PC-9 (cell line): ENCODE measurements at regions of chr1 and their contacts with region 1.

Region 1: GRCh38 chr1:26417111-26417759 is 6.6 kb downstream of the LIN28A start:
- DNase-seq: peak; percentile 84 to 93
- H3K4me3 ChIP-seq: no peak overlapping the region
- H3K27ac ChIP-seq: peak overlapping the region; percentile 91
- H3K4me1 ChIP-seq: peaks cover 9% of the 10 kb centered on the region
- H3K27me3 ChIP-seq: no peaks in the 10 kb centered on the region
- CTCF ChIP-seq: peak; percentile 79

Region 2: GRCh38 chr1:25819576-25820246 is 597.5 kb before region 1 on chr1 and contains the start of gene MTFR1L:
- CTCF ChIA-PET with region 1: no interaction called
- POLR2A ChIA-PET with region 1: no interaction called
- intact Hi-C with region 1: no loop called
- DNase-seq: peak; percentile 70 to 92
- H3K4me3 ChIP-seq: peak within 1 kb of the TSS; percentile 83
- H3K27ac ChIP-seq: peak within 1 kb of the TSS; percentile 69
- H3K4me1 ChIP-seq: peaks cover 16% of the 10 kb centered on the region
- H3K27me3 ChIP-seq: no peaks in the 10 kb centered on the region
- CTCF ChIP-seq: no peak
- total RNA-seq, gene MTFR1L: 40.9 and 41.7 TPM in 2 replicates

Region 3: DNA sequence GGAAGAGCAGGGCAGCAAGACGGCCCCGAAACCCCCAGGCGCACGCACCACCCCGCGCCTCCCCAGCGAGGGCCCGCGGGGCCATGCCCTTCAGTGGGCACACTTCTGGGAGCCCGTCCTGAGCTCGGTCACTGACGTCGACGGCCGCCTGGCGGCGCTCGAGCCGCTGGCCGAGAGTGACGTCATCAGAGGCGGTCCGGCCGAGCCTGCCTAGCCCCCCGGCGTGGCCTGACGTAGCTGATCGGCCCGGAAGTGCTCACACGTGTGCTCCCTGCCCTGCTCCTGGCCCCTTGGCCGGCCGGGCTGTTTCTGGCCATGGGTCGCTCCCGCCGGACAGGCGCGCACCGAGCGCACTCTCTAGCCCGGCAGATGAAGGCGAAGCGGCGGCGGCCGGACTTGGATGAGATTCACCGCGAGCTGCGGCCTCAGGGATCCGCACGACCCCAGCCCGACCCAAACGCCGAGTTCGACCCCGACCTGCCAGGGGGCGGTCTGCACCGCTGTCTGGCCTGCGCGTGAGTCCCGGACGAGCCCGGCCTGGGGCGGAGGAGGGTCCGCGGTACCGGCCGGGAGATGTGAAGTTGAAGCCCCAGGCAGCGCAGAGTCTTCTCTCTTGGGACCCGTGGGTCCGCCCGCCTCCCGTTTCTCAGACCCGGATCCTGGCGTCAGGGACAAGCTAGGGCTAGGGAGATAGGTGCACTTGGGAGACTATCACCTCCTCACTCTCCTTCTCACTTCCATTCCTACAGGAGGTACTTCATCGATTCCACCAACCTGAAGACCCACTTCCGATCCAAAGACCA is 247.4 kb before region 1 on chr1 and contains the start of gene ZNF593:
- CTCF ChIA-PET with region 1: interaction called, 8 read pairs
- POLR2A ChIA-PET with region 1: no interaction called
- intact Hi-C with region 1: loop called (anchors 10 kb)
- DNase-seq: peak; percentile 81 to 89
- H3K4me3 ChIP-seq: peak within 1 kb of the TSS; percentile 99
- H3K27ac ChIP-seq: no peak within 1 kb of the TSS
- H3K4me1 ChIP-seq: peaks cover 6% of the 10 kb centered on the region; the same call in 1 of the 2 replicates
- H3K27me3 ChIP-seq: no peaks in the 10 kb centered on the region
- CTCF ChIP-seq: peak; percentile 86
- total RNA-seq, gene ZNF593: 37.0 and 55.9 TPM in 2 replicates

Region 4: GRCh38 chr1:26321315-26322041 is 95.8 kb before region 1 on chr1:
- CTCF ChIA-PET with region 1: no interaction called
- POLR2A ChIA-PET with region 1: no interaction called
- intact Hi-C with region 1: loop called (anchors 1 kb)
- DNase-seq: peak; percentile 42 to 86
- H3K4me3 ChIP-seq: no peak overlapping the region
- H3K27ac ChIP-seq: no peak overlapping the region
- H3K4me1 ChIP-seq: no peaks in the 10 kb centered on the region
- H3K27me3 ChIP-seq: no peaks in the 10 kb centered on the region
- CTCF ChIP-seq: peak; percentile 80

Region 5: GRCh38 chr1:26337206-26338024 is 79.8 kb before region 1 on chr1:
- CTCF ChIA-PET with region 1: no interaction called
- POLR2A ChIA-PET with region 1: no interaction called
- intact Hi-C with region 1: no loop called
- DNase-seq: no peak
- H3K4me3 ChIP-seq: no peak overlapping the region
- H3K27ac ChIP-seq: no peak overlapping the region
- H3K4me1 ChIP-seq: no peaks in the 10 kb centered on the region
- H3K27me3 ChIP-seq: no peaks in the 10 kb centered on the region
- CTCF ChIP-seq: no peak

Region 6: GRCh38 chr1:26363549-26364448 is 53.4 kb before region 1 on chr1:
- CTCF ChIA-PET with region 1: interaction called, 7 read pairs
- POLR2A ChIA-PET with region 1: interaction called, 6 read pairs
- intact Hi-C with region 1: loop called (anchors 5 kb)
- DNase-seq: peak in 1 of 2 experiments; percentile 76
- H3K4me3 ChIP-seq: no peak overlapping the region
- H3K27ac ChIP-seq: no peak overlapping the region
- H3K4me1 ChIP-seq: peaks cover 7% of the 10 kb centered on the region
- H3K27me3 ChIP-seq: no peaks in the 10 kb centered on the region
- CTCF ChIP-seq: peak; percentile 80

Region 7: DNA sequence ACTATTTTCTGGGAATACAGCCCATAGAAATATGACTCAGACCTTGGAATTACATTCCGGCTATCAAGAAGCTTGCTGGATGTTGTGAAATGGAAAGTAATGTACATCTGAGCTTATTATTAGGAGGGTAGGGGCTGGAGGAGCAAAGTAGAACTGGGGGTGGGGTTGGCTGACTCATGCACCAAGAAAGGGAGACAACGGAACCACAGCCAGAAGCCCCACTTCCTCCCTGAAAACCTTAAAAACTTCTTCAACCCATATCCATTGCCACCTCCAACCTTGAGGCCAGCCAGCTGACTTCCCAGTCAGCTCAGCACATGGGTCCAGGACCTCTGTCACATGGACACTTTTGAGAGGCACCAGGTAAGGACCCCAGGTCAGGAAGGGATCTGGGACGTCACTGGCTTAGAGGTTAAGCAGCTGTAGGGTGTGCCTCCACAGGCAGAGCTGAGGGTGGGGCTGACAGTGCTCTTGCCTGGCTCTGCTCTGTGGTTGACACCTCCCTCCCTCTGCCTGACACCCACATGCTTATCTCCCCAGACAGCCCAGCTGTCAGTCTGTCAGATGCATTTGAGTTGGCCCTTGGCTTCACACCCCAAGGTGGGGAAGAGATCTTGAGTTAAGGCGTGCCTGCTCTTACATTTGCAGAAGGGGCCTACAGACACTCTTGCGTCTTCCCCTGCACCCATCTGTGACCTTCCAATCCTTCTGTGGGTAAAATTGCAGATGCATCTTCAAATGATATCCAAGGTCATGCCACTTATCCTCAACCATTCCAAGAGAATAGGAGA is 39.0 kb before region 1 on chr1:
- CTCF ChIA-PET with region 1: interaction called, 7 read pairs
- POLR2A ChIA-PET with region 1: interaction called, 12 read pairs
- intact Hi-C with region 1: no loop called
- DNase-seq: peak; percentile 64 to 88
- H3K4me3 ChIP-seq: no peak overlapping the region
- H3K27ac ChIP-seq: peak overlapping the region; percentile 56
- H3K4me1 ChIP-seq: peaks cover 17% of the 10 kb centered on the region
- H3K27me3 ChIP-seq: no peaks in the 10 kb centered on the region
- CTCF ChIP-seq: no peak